ENCODE measurements at regions of chr2 and their contacts with region 1.

Region 1: DNA sequence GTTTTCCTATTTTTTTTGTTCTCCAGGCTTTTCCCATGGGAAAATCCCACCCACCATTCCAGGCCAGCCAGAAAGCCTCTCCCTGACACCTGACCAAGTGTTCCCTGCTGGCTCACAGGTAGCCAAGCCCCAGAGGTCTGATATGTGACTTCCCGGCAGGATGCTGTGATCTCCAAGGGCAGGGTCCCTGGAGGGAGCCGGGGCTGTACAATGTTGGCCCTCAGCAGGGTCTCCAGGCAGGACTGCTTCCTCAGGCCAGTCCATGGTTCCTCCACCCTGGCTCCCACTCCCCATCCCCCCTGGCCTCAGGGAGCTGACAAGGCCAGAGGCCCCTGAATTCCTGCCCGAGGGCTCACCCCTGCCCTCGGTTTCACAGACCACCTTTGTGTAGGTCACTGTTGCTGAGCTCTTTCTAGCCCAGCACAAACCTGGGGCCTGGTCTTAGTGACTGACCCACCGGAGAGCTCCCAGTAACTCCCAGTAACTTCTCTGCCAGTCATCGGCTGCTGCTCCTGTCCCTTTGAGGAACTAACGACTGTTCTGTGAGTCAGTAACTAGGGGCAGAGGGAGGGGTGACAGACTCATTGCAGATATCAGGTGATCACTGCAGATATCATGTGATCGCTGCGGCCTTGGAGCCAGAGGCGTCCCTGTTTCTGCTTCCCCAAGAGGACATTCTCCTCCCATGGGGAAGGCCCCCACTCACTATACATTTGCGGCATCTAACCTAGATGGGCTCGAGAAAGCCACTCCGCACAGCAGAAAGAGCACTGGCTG is 38.7 kb downstream of the SDC1 start:
- DNase-seq: peak; percentile 68
- ATAC-seq: peak; percentile 9; the same call in 1 of the 2 replicates
- H3K4me3 ChIP-seq: no peak overlapping the region
- H3K27ac ChIP-seq: peak overlapping the region; percentile 83
- H3K4me1 ChIP-seq: peaks cover 53% of the 10 kb centered on the region
- H3K27me3 ChIP-seq: no peaks in the 10 kb centered on the region
- CTCF ChIP-seq: no peak

Region 2: DNA sequence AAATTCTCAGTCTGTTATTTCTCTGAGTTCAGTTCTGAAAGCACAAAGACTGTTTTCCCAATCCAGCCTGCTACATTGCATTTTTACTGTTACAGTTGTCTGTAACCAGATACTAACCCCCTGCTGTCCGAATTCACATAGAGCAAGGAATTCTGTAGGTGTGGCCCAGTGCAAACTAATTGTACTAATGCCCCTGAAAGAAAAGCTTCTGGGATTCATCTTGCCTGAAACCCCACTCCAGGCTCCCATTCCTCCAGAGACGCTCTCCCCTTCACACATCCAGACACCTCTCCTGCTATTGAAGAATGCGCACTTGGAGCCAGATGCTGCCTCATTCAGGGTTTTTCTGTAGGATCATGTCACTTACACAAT is 411.5 kb before region 1 on chr2:
- CTCF ChIA-PET with region 1: no interaction called
- POLR2A ChIA-PET with region 1: no interaction called
- intact Hi-C with region 1: no loop called
- DNase-seq: no peak
- ATAC-seq: peak; percentile 43
- H3K4me3 ChIP-seq: no peak overlapping the region
- H3K27ac ChIP-seq: no peak overlapping the region
- H3K4me1 ChIP-seq: no peaks in the 10 kb centered on the region
- H3K27me3 ChIP-seq: no peaks in the 10 kb centered on the region
- CTCF ChIP-seq: no peak

Region 3: GRCh38 chr2:20106746-20107145 is 79.5 kb before region 1 on chr2:
- CTCF ChIA-PET with region 1: interaction called, 9 read pairs
- POLR2A ChIA-PET with region 1: no interaction called
- intact Hi-C with region 1: loop called (anchors 10 kb)
- DNase-seq: peak; percentile 71
- ATAC-seq: peak; percentile 83
- H3K4me3 ChIP-seq: peak overlapping the region; percentile 63
- H3K27ac ChIP-seq: no peak overlapping the region
- H3K4me1 ChIP-seq: peaks cover 28% of the 10 kb centered on the region
- H3K27me3 ChIP-seq: no peaks in the 10 kb centered on the region
- CTCF ChIP-seq: peak; percentile 71

Region 4: GRCh38 chr2:20141122-20141762 is 45.0 kb before region 1 on chr2:
- CTCF ChIA-PET with region 1: no interaction called
- POLR2A ChIA-PET with region 1: no interaction called
- intact Hi-C with region 1: loop called (anchors 5 kb)
- DNase-seq: peak; percentile 93
- ATAC-seq: peak; percentile 96
- H3K4me3 ChIP-seq: no peak overlapping the region
- H3K27ac ChIP-seq: peak overlapping the region; percentile 76
- H3K4me1 ChIP-seq: peaks cover 19% of the 10 kb centered on the region
- H3K27me3 ChIP-seq: no peaks in the 10 kb centered on the region
- CTCF ChIP-seq: no peak